ENCODE measurements at regions of chr11 and their contacts with region 1.

Region 1: GRCh38 chr11:11028017-11028692 is 170.3 kb upstream of the ZBED5 start:
- ATAC-seq: peak; percentile 81 to 97 (median 93)
- H3K4me3 ChIP-seq: no peak overlapping the region
- H3K27ac ChIP-seq: no peak overlapping the region
- H3K4me1 ChIP-seq: peaks cover 6 to 17% of the 10 kb centered on the region in 2 donors

Region 2: GRCh38 chr11:10581481-10582019 is 446.6 kb before region 1 on chr11:
- in situ Hi-C with region 1: no loop called
- ATAC-seq: no peak
- H3K4me3 ChIP-seq: no peak overlapping the region
- H3K27ac ChIP-seq: no peak overlapping the region
- H3K4me1 ChIP-seq: no peaks in the 10 kb centered on the region

Region 3: GRCh38 chr11:10784232-10785145 is 243.7 kb before region 1 on chr11:
- in situ Hi-C with region 1: loop called in 2 of 9 experiments (anchors 10 to 25 kb)
- ATAC-seq: peak in 6 of 8 experiments; percentile 27 to 81 (median 66)
- H3K4me3 ChIP-seq: no peak overlapping the region
- H3K27ac ChIP-seq: no peak overlapping the region
- H3K4me1 ChIP-seq: peaks cover 8 to 13% of the 10 kb centered on the region in 2 donors

Region 4: GRCh38 chr11:10792398-10792975 is 235.7 kb before region 1 on chr11:
- in situ Hi-C with region 1: loop called in 3 of 9 experiments (anchors 10 to 25 kb)
- ATAC-seq: peak; percentile 88 to 94 (median 92)
- H3K4me3 ChIP-seq: no peak overlapping the region
- H3K27ac ChIP-seq: no peak overlapping the region
- H3K4me1 ChIP-seq: no peaks in the 10 kb centered on the region

Region 5: GRCh38 chr11:11157185-11157584 is 129.0 kb after region 1 on chr11:
- in situ Hi-C with region 1: loop called in 1 of 9 experiments (anchors 25 kb)
- ATAC-seq: peak in 4 of 8 experiments; percentile 32 to 74 (median 59)
- H3K4me3 ChIP-seq: no peak overlapping the region
- H3K27ac ChIP-seq: no peak overlapping the region
- H3K4me1 ChIP-seq: peaks cover 1 to 3% of the 10 kb centered on the region in 2 donors

Region 6: GRCh38 chr11:11265994-11266606 is 237.9 kb after region 1 on chr11:
- in situ Hi-C with region 1: loop called in 3 of 9 experiments (anchors 25 kb)
- ATAC-seq: peak in 4 of 8 experiments; percentile 52 to 84 (median 66)
- H3K4me3 ChIP-seq: no peak overlapping the region
- H3K27ac ChIP-seq: no peak overlapping the region
- H3K4me1 ChIP-seq: peaks cover 3 to 9% of the 10 kb centered on the region in 2 donors